ENCODE measurements at regions of chr7 and their contacts with region 1.

Region 1: GRCh38 chr7:30225863-30226613 is 58.4 kb upstream of the ZNRF2 start:
- DNase-seq: peak; percentile 79
- ATAC-seq: peak; percentile 91
- H3K4me3 ChIP-seq: no peak overlapping the region
- H3K27ac ChIP-seq: peak overlapping the region; percentile 29; the same call in 1 of the 2 replicates
- H3K4me1 ChIP-seq: peaks cover 25% of the 10 kb centered on the region
- H3K27me3 ChIP-seq: no peaks in the 10 kb centered on the region
- CTCF ChIP-seq: no peak
- EP300 ChIP-seq: peak; percentile 83 to 91
- POLR2A ChIP-seq: no peak
- RAD21 ChIP-seq: no peak

Region 2: GRCh38 chr7:30184791-30185487 is 41.1 kb before region 1 on chr7:
- CTCF ChIA-PET with region 1: interaction called, 3 read pairs
- POLR2A ChIA-PET with region 1: interaction called, 5 read pairs
- RAD21 ChIA-PET with region 1: interaction called, 11 read pairs
- SMC1A ChIA-PET with region 1: interaction called, 41 read pairs
- in situ Hi-C with region 1: no loop called
- intact Hi-C with region 1: no loop called
- DNase-seq: no peak
- ATAC-seq: peak; percentile 42
- H3K4me3 ChIP-seq: no peak overlapping the region
- H3K27ac ChIP-seq: no peak overlapping the region
- H3K4me1 ChIP-seq: peaks cover 7% of the 10 kb centered on the region; the same call in 1 of the 2 replicates
- H3K27me3 ChIP-seq: no peaks in the 10 kb centered on the region
- CTCF ChIP-seq: no peak
- EP300 ChIP-seq: no peak
- POLR2A ChIP-seq: no peak
- RAD21 ChIP-seq: no peak

Region 3: DNA sequence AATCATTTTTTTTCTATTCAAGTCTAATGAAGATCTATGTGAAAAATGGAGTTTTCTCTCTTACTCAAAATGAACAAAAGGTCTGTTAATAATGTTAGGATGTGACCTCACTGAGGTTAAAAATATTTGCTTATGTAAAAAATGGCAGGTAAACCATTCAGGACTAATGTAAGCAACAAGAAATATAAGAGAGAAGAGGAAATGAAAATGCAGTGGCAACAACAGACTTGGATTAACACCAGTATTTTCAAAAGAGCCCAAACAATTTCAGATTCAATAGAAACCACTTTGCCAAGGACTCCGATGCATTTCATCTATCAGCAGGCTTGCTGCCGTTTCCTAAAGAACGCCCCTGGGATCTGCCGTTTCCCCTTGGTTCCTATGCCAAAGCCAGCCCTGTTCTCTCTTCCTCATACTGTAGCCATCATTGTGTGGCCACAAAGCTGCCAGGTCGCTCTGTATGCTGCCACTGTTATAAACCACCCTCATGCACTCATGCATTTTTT is 24.8 kb before region 1 on chr7:
- CTCF ChIA-PET with region 1: interaction called, 3 read pairs
- POLR2A ChIA-PET with region 1: interaction called, 4 read pairs
- RAD21 ChIA-PET with region 1: interaction called, 10 read pairs
- SMC1A ChIA-PET with region 1: interaction called, 3 read pairs
- in situ Hi-C with region 1: no loop called
- intact Hi-C with region 1: no loop called
- DNase-seq: peak; percentile 51
- ATAC-seq: peak; percentile 92
- H3K4me3 ChIP-seq: 0 out of 2 replicates have a peak overlapping the region, but pooled peaks have one; percentile 14
- H3K27ac ChIP-seq: peak overlapping the region; percentile 17; the same call in 1 of the 2 replicates
- H3K4me1 ChIP-seq: peaks cover 19% of the 10 kb centered on the region
- H3K27me3 ChIP-seq: no peaks in the 10 kb centered on the region
- CTCF ChIP-seq: no peak
- EP300 ChIP-seq: peak; percentile 76 to 80; a peak in 2 of 4 replicates
- POLR2A ChIP-seq: no peak
- RAD21 ChIP-seq: no peak

Region 4: DNA sequence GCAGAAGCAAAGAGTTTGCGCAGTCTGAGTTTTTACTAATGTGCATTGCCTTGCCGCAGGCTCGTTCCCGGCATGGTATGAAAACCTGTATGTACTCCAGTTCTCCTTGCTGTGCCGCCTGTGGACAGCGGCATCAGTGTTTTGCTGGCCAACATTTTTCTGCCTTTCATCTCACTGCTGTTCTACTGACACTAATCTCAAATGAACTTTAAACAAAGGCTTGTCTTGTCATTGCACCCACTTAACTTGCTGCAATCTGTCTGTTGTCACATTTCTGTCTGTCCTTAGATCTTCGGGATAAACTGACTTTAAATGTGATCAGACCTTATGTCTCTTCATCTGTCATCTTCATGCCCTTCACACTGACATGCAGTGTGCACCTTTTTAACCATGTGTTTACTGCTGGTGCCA is 13.3 kb before region 1 on chr7:
- CTCF ChIA-PET with region 1: interaction called, 10 read pairs
- POLR2A ChIA-PET with region 1: no interaction called
- RAD21 ChIA-PET with region 1: interaction called, 3 read pairs
- SMC1A ChIA-PET with region 1: interaction called, 33 read pairs
- in situ Hi-C with region 1: no loop called
- intact Hi-C with region 1: loop called (anchors 1 kb)
- DNase-seq: no peak
- ATAC-seq: no peak
- H3K4me3 ChIP-seq: no peak overlapping the region
- H3K27ac ChIP-seq: no peak overlapping the region
- H3K4me1 ChIP-seq: peaks cover 12% of the 10 kb centered on the region; the same call in 1 of the 2 replicates
- H3K27me3 ChIP-seq: no peaks in the 10 kb centered on the region
- CTCF ChIP-seq: no peak
- EP300 ChIP-seq: no peak
- POLR2A ChIP-seq: no peak
- RAD21 ChIP-seq: no peak

Region 5: GRCh38 chr7:30238721-30239441 is 12.8 kb after region 1 on chr7:
- CTCF ChIA-PET with region 1: interaction called, 4 read pairs
- POLR2A ChIA-PET with region 1: no interaction called
- RAD21 ChIA-PET with region 1: interaction called, 7 read pairs
- SMC1A ChIA-PET with region 1: interaction called, 14 read pairs
- in situ Hi-C with region 1: no loop called
- intact Hi-C with region 1: loop called (anchors 2 kb)
- DNase-seq: peak; percentile 75
- ATAC-seq: peak; percentile 83
- H3K4me3 ChIP-seq: no peak overlapping the region; the same call in 1 of the 2 replicates
- H3K27ac ChIP-seq: peak overlapping the region; percentile 9; the same call in 1 of the 2 replicates
- H3K4me1 ChIP-seq: peaks cover 27% of the 10 kb centered on the region
- H3K27me3 ChIP-seq: no peaks in the 10 kb centered on the region
- CTCF ChIP-seq: no peak
- EP300 ChIP-seq: peak in 1 of 2 experiments; percentile 67; a peak in 2 of 4 replicates
- POLR2A ChIP-seq: no peak
- RAD21 ChIP-seq: no peak

Region 6: DNA sequence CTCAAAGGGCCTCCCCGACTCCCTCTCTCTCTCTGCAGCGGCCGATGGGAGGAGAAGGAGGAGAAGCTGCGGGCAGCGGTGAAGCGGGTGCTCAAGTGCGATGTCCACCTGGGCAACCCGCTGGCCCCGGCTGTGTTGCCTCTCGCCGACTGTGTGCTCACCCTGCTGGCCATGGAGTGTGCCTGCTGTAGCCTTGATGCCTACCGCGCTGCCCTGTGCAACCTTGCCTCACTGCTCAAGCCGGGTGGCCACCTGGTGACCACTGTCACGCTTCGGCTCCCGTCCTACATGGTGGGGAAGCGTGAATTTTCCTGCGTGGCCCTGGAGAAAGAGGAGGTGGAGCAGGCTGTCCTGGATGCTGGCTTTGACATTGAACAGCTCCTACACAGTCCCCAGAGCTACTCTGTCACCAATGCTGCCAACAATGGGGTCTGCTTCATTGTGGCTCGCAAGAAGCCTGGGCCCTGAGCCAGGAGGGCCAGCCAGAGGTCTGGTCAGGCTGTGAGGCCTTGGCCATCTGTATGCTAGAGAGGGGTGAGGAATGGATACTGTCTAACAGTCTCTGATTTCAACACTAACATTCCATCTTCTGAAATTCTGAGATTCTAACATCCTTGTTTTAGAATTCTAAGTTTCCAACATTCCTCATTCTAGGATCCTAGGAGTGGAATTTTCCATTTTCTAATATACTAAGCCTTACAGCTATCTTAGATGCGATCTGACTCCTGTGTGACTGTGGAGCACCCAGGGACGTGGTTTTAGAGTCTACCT is 529.5 kb after region 1 on chr7:
- CTCF ChIA-PET with region 1: no interaction called
- POLR2A ChIA-PET with region 1: no interaction called
- RAD21 ChIA-PET with region 1: no interaction called
- SMC1A ChIA-PET with region 1: no interaction called
- in situ Hi-C with region 1: no loop called
- intact Hi-C with region 1: no loop called
- DNase-seq: no peak
- ATAC-seq: no peak
- H3K4me3 ChIP-seq: no peak overlapping the region
- H3K27ac ChIP-seq: no peak overlapping the region
- H3K4me1 ChIP-seq: no peaks in the 10 kb centered on the region
- H3K27me3 ChIP-seq: no peaks in the 10 kb centered on the region
- CTCF ChIP-seq: no peak
- EP300 ChIP-seq: no peak
- POLR2A ChIP-seq: no peak
- RAD21 ChIP-seq: no peak

Measured in GM12878 (cell line).